GM18951 (cell line): ENCODE measurements at regions of chr2 and their contacts with region 1.

Region 1: GRCh38 chr2:110657724-110658305 is 20.0 kb downstream of the BUB1 start:
- POLR2A ChIP-seq: no peak

Region 2: DNA sequence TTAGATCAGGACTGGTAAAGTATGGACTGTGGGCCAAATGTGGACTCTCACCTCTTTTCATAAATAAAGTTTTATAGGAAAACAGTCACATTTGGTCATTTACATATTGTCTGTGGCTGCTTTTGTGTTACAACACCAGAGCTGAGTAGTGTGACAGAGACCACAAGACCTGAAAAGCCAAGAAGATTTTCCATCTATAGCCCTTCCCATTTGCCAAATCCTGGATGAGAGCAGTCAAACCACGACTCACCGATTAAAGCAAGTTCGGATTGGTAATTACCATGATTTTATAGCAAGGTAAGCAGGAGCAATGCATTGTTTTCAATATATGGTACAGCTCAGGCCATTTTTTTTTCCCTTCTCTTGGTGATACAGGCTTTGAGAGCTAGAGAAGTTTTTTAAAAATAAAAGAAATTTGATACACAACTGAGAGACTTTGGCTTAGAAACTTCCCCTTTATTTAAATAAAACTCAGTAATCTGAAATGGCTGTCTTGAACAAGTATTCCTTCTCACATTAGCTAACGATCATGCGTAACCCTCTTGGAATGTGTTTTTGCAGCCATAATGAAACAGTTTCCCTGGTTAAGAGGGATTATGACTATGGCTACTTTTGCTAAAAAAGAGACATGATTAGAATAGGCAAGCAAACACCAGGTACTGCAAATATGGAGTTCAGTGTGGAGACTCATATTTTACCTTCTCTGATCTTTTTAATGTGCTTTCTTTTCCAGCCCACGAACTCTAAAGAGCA is 532.7 kb before region 1 on chr2:
- in situ Hi-C with region 1: no loop called
- POLR2A ChIP-seq: no peak

Region 3: GRCh38 chr2:110768604-110769003 is 110.8 kb after region 1 on chr2:
- in situ Hi-C with region 1: loop called (anchors 10 kb)
- POLR2A ChIP-seq: no peak

Region 4: GRCh38 chr2:111032721-111033429 is 375.1 kb after region 1 on chr2:
- in situ Hi-C with region 1: no loop called
- POLR2A ChIP-seq: no peak